ENCODE measurements at regions of chr21 and their contacts with region 1.

Region 1: GRCh38 chr21:45140346-45140940 is 66.1 kb downstream of the ADARB1 start:
- DNase-seq: peak; percentile 79 to 89
- ATAC-seq: peak; percentile 97
- H3K4me3 ChIP-seq: no peak overlapping the region
- H3K27ac ChIP-seq: no peak overlapping the region
- H3K4me1 ChIP-seq: peaks cover 12% of the 10 kb centered on the region; the same call in 2 of the 3 replicates
- CTCF ChIP-seq: peak; percentile 66
- EP300 ChIP-seq: no peak
- POLR2A ChIP-seq: no peak
- RAD21 ChIP-seq: peak; percentile 83 to 86

Region 2: DNA sequence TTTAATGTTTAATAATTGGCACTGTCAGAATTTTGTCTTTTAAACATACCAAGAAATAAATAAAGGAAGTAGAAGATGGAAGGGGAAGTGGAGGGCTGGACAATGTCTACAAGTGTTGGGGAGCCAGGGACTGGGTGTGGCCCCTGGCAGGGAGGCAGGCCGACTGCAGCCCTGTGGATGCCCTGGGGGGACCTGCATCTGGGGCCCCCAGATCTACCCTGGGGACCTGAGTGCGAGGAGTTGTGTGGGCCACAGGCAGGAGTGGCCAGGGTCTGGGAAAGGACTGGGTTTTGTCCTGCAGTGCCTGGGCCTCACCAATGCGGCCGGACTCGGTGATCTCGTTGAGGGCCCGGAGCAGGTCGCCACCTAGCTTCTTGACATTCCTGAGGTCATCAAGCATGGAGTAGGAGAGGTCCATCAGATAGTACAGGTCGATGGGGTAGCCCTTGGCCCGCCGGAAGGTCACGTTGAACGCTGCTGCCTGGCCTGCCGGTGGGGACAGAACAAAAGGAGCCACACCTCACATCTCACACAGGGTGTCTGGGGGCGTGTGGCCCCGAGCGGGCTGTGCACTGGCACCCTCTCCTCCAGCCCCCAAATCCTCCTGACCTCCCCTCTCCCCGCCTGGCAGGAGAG is 237.3 kb before region 1 on chr21:
- CTCF ChIA-PET with region 1: no interaction called
- POLR2A ChIA-PET with region 1: no interaction called
- DNase-seq: no peak
- ATAC-seq: no peak
- H3K4me3 ChIP-seq: no peak overlapping the region
- H3K27ac ChIP-seq: no peak overlapping the region
- H3K4me1 ChIP-seq: no peaks in the 10 kb centered on the region
- CTCF ChIP-seq: no peak
- EP300 ChIP-seq: no peak
- POLR2A ChIP-seq: no peak
- RAD21 ChIP-seq: no peak

Region 3: GRCh38 chr21:44949779-44950198 is 190.7 kb before region 1 on chr21:
- CTCF ChIA-PET with region 1: interaction called, 224 read pairs
- POLR2A ChIA-PET with region 1: no interaction called
- DNase-seq: peak; percentile 65 to 70
- ATAC-seq: peak; percentile 67 to 93
- H3K4me3 ChIP-seq: no peak overlapping the region
- H3K27ac ChIP-seq: peak overlapping the region in 1 of 2 experiments; percentile 88; a peak in 3 of 6 replicates
- H3K4me1 ChIP-seq: peaks cover 36% of the 10 kb centered on the region
- CTCF ChIP-seq: peak; percentile 67
- EP300 ChIP-seq: no peak
- POLR2A ChIP-seq: no peak
- RAD21 ChIP-seq: peak; percentile 76

Region 4: GRCh38 chr21:45098867-45099266 is 41.6 kb before region 1 on chr21:
- CTCF ChIA-PET with region 1: interaction called, 32 read pairs
- POLR2A ChIA-PET with region 1: no interaction called
- DNase-seq: peak in 1 of 2 experiments; percentile 14
- ATAC-seq: peak; percentile 68 to 69; a peak in 4 of 6 replicates
- H3K4me3 ChIP-seq: no peak overlapping the region
- H3K27ac ChIP-seq: no peak overlapping the region
- H3K4me1 ChIP-seq: peaks cover 11% of the 10 kb centered on the region; the same call in 2 of the 3 replicates
- CTCF ChIP-seq: peak; percentile 33; the same call in 2 of the 3 replicates
- EP300 ChIP-seq: no peak
- POLR2A ChIP-seq: no peak
- RAD21 ChIP-seq: peak in 1 of 2 experiments; percentile 17; a peak in 1 of 5 replicates

Region 5: DNA sequence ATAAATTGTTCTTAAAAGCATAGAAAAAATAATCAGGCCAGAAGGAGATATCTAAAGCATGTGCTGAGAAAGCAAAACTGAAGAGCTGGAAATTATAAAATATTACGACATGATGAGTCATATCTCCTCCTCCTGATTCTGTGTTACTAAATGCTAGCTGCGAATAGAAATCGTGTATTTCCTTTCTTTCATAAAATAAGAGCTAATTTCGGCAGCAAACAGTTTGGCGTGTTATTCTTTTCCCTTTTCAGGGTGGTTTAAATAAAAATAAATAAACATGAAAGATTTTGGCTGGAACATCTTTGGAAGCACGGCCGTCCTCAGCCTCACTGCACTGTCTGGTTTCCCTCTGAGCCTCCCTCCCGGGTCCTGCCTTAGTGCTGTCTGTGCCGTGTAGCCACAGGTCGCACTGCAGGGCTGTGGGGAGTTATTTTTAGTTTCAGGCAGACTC is 10.1 kb before region 1 on chr21:
- CTCF ChIA-PET with region 1: interaction called, 99 read pairs
- POLR2A ChIA-PET with region 1: no interaction called
- DNase-seq: peak in 1 of 2 experiments; percentile 18
- ATAC-seq: peak in 1 of 2 experiments; percentile 58; a peak in 3 of 6 replicates
- H3K4me3 ChIP-seq: no peak overlapping the region
- H3K27ac ChIP-seq: peak overlapping the region in 1 of 2 experiments; percentile 44; a peak in 2 of 6 replicates
- H3K4me1 ChIP-seq: peaks cover 18% of the 10 kb centered on the region
- CTCF ChIP-seq: no peak
- EP300 ChIP-seq: no peak
- POLR2A ChIP-seq: no peak
- RAD21 ChIP-seq: no peak

Region 6: DNA sequence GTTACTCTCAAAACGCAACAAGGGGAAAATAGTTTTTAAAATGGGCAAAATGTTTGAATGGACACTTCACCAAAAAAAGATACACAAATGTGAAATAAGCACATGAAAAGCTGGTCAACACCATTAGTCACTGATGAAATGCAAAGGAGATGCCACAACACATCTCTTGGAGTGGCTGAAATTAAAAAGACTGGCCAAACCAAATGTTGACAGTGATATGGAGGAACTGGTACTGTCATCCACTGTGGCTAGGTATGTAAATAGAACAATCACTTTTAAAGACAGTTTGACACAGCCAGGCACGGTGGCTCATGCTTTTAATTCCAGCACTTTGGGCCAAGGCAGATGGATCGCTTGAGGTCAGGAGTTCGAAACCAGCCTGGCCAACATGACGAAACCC is 56.2 kb after region 1 on chr21:
- CTCF ChIA-PET with region 1: no interaction called
- POLR2A ChIA-PET with region 1: no interaction called
- DNase-seq: no peak
- ATAC-seq: no peak
- H3K4me3 ChIP-seq: no peak overlapping the region
- H3K27ac ChIP-seq: no peak overlapping the region
- H3K4me1 ChIP-seq: no peaks in the 10 kb centered on the region
- CTCF ChIP-seq: no peak
- EP300 ChIP-seq: no peak
- POLR2A ChIP-seq: no peak
- RAD21 ChIP-seq: no peak

Region 7: GRCh38 chr21:45256912-45257672 is 116.6 kb after region 1 on chr21:
- CTCF ChIA-PET with region 1: interaction called, 12 read pairs
- POLR2A ChIA-PET with region 1: no interaction called
- DNase-seq: no peak
- ATAC-seq: no peak
- H3K4me3 ChIP-seq: no peak overlapping the region
- H3K27ac ChIP-seq: no peak overlapping the region
- H3K4me1 ChIP-seq: 0 out of 3 replicates have a peak, but pooled peaks cover 4% of the 10 kb centered on the region
- CTCF ChIP-seq: no peak
- EP300 ChIP-seq: no peak
- POLR2A ChIP-seq: no peak
- RAD21 ChIP-seq: no peak

Region 8: DNA sequence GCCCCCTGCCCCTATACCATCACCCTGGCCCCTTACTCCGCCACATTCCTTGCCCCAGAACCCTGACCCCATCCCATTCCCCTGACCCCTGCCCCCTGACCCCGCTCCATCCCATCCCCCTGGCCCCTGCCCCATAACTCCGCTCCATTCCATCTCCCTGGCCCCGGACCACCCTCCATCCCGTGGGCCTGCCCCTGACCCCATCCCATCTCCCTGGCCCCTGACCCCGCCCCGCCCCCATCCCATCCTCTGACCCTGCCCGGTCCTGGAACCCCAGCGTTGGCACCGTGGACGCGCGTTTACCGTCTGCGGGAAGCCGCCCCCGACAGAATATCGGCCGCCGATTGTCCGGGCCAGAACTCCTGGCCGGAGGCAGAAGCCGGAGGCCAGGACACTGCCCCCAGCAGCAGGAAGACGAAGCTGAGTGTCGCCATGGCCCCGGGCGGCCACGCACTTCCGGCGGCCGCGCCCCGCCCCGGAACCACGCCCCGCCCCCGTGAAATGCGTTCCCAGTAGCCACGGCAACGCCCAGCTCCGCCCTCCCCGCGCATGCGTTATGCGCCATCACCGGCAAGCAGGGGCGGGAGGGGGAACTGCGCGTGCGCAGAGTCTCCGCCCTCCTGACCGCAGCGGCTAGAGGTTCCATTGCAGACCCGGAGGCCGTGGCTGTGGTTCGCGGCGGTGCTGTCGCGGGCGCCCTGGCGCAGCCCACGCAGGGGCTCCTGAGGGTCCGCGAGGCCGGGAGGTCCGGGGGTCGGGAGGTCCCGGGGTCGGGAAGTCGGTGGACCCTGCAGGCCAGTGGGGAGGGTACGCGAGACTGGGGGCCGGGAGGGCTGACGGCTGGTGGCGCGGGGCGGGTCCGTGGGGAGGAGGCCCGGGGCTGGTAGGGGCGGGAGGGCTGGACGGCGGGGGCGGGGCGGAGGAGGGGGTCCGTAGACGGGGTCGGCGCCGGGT is 147.3 kb after region 1 on chr21 and contains the start of gene POFUT2:
- CTCF ChIA-PET with region 1: interaction called, 97 read pairs
- POLR2A ChIA-PET with region 1: interaction called, 3 read pairs
- DNase-seq: peak; percentile 83 to 90
- ATAC-seq: peak; percentile 77 to 80
- H3K4me3 ChIP-seq: peak within 1 kb of the TSS; percentile 86
- H3K27ac ChIP-seq: peak within 1 kb of the TSS; percentile 86 to 94
- H3K4me1 ChIP-seq: peaks cover 14% of the 10 kb centered on the region
- CTCF ChIP-seq: no peak
- EP300 ChIP-seq: no peak
- POLR2A ChIP-seq: peak; percentile 66
- RAD21 ChIP-seq: no peak
- polyA plus RNA-seq, gene POFUT2: 10.5 and 10.7 TPM in 2 replicates

Measured in A549 (cell line).